Cardiac septum (tissue), 1 donor: ENCODE measurements at regions of chr1 and their contacts with region 1.

Region 1: GRCh38 chr1:214261206-214262123 is 19.5 kb upstream of the SMYD2 start:
- DNase-seq: peak; percentile 93

Region 2: GRCh38 chr1:214228976-214229375 is 32.5 kb before region 1 on chr1:
- intact Hi-C with region 1: loop called (anchors 2 kb)
- DNase-seq: no peak

Region 3: DNA sequence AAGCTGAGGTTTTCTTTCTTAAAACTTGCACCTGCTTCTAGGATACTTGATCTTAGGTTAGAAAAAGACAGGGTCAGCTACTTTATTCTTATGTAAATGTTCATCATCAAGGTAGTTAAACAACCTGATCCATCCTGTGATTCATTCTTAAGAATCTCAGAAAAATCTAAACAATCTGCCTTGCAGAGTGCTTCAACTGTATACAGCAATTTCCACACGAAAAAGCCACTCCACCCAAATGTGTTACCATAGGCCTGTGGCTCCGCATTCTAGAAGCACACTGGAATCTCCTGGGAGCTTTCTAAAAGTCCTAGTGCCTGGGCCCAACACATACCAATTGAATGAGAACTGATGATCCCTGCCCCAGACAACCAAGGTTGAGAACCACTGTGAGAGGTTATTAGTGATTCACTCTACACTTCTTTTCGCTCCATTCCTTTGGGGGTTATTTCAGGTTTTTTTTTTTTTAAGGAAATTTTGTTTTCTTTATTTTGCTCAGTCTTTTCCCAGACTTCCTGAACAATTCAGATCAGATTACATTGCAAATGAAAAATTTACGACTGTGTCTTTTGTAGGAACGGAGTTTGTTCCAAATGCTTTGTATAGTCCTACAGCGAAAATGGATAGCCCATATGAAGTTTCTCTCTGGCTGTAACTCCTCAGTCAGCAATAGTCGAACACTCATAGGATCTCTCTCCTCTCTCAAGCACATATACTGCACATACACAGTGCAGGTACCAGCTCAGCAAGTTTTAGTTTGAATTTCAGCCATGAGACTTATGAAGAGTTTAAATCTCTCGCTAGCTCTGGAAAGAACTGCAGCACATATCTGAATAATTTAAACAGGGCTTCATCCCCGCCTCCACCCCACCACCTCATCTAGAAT is 35.6 kb after region 1 on chr1:
- intact Hi-C with region 1: no loop called
- DNase-seq: no peak